ENCODE measurements at regions of chr18 and their contacts with region 1.

Region 1: GRCh38 chr18:70086085-70086484 is 119.4 kb downstream of the RTTN start:
- DNase-seq: no peak
- H3K4me3 ChIP-seq: no peak overlapping the region
- CTCF ChIP-seq: no peak

Region 2: GRCh38 chr18:68847219-68847837 is 1238.8 kb before region 1 on chr18:
- CTCF ChIA-PET with region 1: interaction called, 39 read pairs
- POLR2A ChIA-PET with region 1: no interaction called
- DNase-seq: no peak
- H3K4me3 ChIP-seq: no peak overlapping the region
- CTCF ChIP-seq: peak; percentile 47